Activated CD4-positive, alpha-beta memory T cell treated with anti-CD3 and anti-CD28 coated beads for 36 hours (primary cell): ENCODE measurements at regions of chr1 and their contacts with region 1.

Region 1: DNA sequence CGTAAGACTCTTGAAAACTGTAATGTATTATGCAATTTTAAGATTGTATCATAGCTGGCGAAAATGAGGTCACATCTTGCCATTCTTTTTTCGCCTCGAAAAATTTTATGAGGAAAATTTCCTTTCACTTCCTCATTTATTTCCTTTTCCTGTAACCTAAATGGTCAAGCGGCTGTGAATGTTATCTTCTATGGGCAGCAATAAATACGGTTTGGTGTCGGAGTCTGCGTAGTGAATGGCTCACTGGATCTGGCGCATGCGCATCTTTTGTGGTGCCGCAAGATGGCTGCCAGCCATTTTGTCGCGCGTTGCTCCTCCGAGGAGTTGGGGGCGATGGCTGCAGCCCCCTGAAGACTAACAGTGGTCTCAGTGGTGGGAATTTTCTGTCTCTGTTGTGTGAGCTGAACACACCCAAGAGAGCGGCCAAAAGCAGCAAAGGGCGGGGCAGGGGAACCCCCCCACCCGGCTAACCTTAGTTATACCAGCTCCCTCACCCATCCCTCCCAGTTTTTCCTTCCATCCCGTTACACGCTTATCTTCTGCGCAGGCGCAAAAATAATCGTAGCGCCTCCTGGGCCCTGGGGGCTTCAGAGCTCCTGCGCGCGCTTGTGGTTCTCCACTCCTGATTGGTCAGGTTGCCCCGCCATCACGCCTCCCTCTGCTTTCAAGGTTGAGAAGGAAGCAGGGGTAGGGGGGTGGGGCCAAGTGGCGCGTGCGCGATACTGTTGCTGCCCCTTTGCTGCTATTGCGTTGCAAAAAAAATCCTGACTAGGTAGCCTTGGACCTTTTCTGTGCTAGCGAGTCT is at the start of gene RPRD2:
- DNase-seq: peak; percentile 100
- H3K4me3 Mint-ChIP-seq: peak within 1 kb of the TSS; percentile 99
- H3K27ac Mint-ChIP-seq: peak within 1 kb of the TSS; percentile 100
- H3K4me1 Mint-ChIP-seq: peaks cover 19% of the 10 kb centered on the region
- H3K27me3 Mint-ChIP-seq: peaks cover 1% of the 10 kb centered on the region
- total RNA-seq, gene RPRD2: 22.2 to 22.6 TPM

Region 2: DNA sequence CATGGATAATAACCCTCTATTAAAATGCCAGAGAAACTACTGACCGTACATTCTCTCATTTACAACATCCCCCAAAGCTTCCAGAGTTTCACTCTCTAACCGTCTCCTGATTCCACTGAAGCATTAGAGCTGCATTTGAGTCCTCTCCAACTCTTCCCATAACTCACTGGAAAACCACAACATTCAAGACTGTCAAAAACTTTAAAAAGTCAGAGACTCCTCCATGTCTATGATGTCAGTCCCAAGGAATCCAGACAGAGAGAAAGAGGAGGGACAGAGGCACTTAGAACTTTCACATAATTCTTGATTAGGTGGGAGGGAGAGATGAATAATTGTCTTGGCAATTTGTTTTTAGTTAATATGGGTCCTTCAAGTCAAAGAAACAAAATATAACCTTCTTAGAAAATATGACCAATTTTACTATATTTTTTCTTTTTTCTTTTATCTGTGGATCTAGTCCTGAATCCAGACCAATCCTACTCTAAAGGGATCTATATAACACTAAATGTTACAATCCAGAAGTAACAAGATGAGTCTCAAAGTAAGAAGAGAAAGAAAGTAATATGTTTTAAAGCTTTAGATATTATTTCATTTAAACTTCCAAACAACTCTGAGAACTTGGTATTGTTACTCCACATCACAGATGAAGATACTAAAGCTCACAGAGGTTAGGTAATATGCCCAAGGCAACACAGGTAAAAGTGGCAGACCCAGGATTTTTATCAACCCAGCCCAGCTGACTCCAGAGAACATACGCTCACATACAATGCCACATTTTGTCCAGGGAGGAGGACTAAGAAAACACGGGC is 376.9 kb before region 1 on chr1:
- CTCF ChIA-PET with region 1: no interaction called
- POLR2A ChIA-PET with region 1: no interaction called
- intact Hi-C with region 1: no loop called
- DNase-seq: no peak
- H3K4me3 Mint-ChIP-seq: no peak overlapping the region
- H3K27ac Mint-ChIP-seq: no peak overlapping the region
- H3K4me1 Mint-ChIP-seq: peaks cover 4% of the 10 kb centered on the region
- H3K27me3 Mint-ChIP-seq: no peaks in the 10 kb centered on the region

Region 3: DNA sequence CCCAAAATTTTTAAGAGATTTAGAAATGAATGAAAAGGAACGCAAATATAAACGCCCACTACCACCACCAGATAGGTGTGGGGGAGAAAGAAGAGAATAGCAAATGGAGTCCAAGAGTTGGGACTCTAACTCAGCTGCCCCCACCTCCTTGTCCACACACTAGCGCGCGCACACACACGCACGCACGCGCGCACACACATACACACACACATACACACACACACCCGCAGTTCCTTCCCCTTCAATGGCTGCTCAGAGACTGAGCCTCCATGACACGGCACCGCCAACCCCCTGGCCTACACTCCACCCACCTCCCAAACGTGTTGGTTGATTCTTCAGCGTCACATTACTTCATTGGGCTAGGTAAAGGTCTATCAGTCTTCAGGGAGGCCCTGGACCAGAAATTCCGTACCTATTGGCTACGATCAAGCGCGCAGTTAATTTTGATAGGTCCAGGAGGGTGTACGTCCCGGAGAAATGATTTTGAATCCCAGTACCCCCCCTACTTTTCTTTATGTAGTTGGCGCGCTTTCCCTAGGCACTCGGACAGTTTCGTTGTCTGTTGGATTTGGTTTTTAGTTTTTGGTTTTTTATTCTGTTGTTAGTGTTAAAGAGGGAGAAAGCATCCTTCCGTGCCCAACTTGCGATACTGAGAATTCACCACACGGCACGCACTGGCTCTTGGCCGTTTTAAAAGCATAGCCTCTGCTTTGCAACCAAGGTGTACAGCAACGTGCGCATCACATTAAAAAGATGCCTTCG is 127.6 kb before region 1 on chr1 and contains the start of gene ANP32E:
- CTCF ChIA-PET with region 1: no interaction called
- POLR2A ChIA-PET with region 1: interaction called, 9 read pairs
- intact Hi-C with region 1: loop called (anchors 1 kb)
- DNase-seq: peak; percentile 97
- H3K4me3 Mint-ChIP-seq: no peak within 1 kb of the TSS
- H3K27ac Mint-ChIP-seq: no peak within 1 kb of the TSS
- H3K4me1 Mint-ChIP-seq: peaks cover 17% of the 10 kb centered on the region
- H3K27me3 Mint-ChIP-seq: no peaks in the 10 kb centered on the region
- total RNA-seq, gene ANP32E: 224 to 228 TPM

Region 4: GRCh38 chr1:150293433-150294168 is 70.0 kb before region 1 on chr1 and contains the start of gene MRPS21:
- CTCF ChIA-PET with region 1: no interaction called
- POLR2A ChIA-PET with region 1: no interaction called
- intact Hi-C with region 1: loop called (anchors 5 kb)
- DNase-seq: peak; percentile 94
- H3K4me3 Mint-ChIP-seq: peak within 1 kb of the TSS; percentile 96
- H3K27ac Mint-ChIP-seq: peak within 1 kb of the TSS; percentile 94
- H3K4me1 Mint-ChIP-seq: peaks cover 39% of the 10 kb centered on the region
- H3K27me3 Mint-ChIP-seq: no peaks in the 10 kb centered on the region
- total RNA-seq, gene MRPS21: 78.6 to 82.9 TPM

Region 5: DNA sequence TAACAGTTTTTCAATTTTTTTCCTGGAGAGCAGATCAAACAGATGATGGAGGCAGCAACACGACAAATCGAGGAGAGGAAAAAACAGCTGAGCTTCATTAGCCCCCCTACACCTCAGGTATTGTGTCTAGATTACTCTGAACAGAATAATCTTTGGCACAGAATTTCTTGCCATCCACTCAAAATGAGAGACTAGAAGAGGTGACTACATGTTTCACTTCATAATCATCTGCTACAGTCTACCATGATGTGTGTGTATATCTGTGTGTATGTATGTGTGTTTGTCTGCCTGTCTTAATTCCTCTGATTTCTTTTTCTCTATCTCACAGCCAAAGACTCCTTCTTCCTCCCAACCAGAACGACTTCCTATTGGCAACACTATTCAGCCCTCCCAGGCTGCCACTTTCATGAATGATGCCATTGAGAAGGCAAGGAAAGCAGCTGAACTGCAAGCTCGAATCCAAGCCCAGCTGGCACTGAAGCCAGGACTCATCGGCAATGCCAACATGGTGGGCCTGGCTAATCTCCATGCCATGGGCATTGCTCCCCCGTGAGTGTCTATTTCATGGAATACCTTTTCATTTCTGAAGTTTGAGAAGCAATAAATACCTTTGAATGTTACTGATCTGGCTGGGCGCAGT is 30.9 kb before region 1 on chr1:
- CTCF ChIA-PET with region 1: no interaction called
- POLR2A ChIA-PET with region 1: no interaction called
- intact Hi-C with region 1: no loop called
- DNase-seq: no peak
- H3K4me3 Mint-ChIP-seq: no peak overlapping the region
- H3K27ac Mint-ChIP-seq: no peak overlapping the region
- H3K4me1 Mint-ChIP-seq: peaks cover 6% of the 10 kb centered on the region
- H3K27me3 Mint-ChIP-seq: no peaks in the 10 kb centered on the region

Region 6: GRCh38 chr1:150444232-150444631 is 80.6 kb after region 1 on chr1:
- CTCF ChIA-PET with region 1: no interaction called
- POLR2A ChIA-PET with region 1: no interaction called
- intact Hi-C with region 1: loop called (anchors 5 kb)
- DNase-seq: peak; percentile 13
- H3K4me3 Mint-ChIP-seq: no peak overlapping the region
- H3K27ac Mint-ChIP-seq: peak overlapping the region; percentile 87
- H3K4me1 Mint-ChIP-seq: peaks cover 12% of the 10 kb centered on the region
- H3K27me3 Mint-ChIP-seq: no peaks in the 10 kb centered on the region

Region 7: GRCh38 chr1:150456146-150456647 is 92.6 kb after region 1 on chr1:
- CTCF ChIA-PET with region 1: no interaction called
- POLR2A ChIA-PET with region 1: no interaction called
- intact Hi-C with region 1: no loop called
- DNase-seq: no peak
- H3K4me3 Mint-ChIP-seq: no peak overlapping the region
- H3K27ac Mint-ChIP-seq: no peak overlapping the region
- H3K4me1 Mint-ChIP-seq: peaks cover 6% of the 10 kb centered on the region
- H3K27me3 Mint-ChIP-seq: no peaks in the 10 kb centered on the region

Region 8: DNA sequence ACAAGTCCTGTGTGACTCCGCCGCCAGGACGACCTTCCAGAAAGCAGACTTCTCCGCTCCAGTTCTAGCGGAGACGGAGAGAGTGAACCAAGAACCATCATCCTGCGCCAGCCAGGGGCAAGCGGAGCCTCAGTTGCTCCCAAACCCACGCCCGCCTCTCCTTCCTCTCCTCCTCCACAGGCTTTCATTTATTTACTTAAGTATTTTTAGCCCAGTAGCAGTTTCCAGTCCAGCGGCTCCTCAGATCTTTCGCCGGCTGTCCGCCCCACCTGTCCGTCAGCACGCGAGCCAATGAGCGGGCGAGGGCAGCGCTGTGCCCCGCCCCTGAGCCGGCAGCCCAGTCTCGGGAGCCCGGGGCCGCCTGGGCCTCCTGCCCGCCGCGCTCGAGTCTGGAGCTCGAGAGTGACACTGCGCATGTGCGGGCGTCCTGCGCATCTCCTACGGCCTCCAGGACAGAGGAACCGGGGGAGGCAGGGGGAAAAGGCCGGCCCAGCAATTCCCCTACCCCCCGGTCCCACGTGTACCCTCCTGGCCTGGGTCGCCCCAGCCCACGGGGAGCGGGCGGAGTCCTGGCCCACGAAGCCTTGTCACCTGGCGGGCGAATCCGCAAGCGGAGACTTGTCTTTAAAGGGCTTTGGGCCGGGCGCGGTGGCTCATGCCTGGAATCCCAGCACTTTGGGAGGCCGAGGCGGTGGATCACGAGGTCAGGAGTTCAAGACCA is 151.9 kb after region 1 on chr1 and contains the start of gene FALEC:
- CTCF ChIA-PET with region 1: no interaction called
- POLR2A ChIA-PET with region 1: interaction called, 11 read pairs
- intact Hi-C with region 1: no loop called
- DNase-seq: peak; percentile 94
- H3K4me3 Mint-ChIP-seq: peak within 1 kb of the TSS; percentile 83
- H3K27ac Mint-ChIP-seq: peak within 1 kb of the TSS; percentile 33
- H3K4me1 Mint-ChIP-seq: peaks cover 11% of the 10 kb centered on the region
- H3K27me3 Mint-ChIP-seq: no peaks in the 10 kb centered on the region
- total RNA-seq, gene FALEC: not detected

Region 9: DNA sequence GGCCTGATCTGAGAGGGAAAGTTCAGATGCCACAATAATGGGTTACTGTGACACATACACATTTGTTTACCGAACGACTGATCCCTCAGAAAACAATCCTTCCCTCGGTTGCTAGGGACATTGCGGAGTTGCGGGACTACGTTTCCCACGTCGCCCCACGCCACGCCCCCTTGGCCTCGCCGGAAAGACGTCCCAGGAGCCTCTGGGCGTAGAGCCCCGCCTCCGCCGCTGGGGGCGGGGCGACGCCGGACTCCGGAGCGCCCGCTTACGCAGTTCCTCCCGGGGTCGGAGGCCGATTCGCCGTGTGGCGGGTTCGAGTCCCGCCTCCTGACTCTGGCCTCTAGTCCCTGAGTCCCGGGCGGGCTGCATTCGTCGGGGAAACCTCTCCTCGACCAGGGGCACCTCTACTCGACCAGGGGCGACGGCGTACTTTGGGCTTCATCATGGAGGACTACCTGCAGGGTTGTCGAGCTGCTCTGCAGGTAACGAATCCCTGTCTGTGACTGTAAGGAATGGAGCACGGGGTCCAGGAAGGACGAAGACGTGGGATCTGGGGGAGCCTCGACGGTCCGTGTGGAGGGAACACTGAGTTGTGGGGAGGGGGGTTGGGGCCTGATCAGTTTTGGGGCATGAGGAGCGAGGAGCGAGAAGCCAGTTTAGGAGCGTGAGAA is 644.7 kb after region 1 on chr1 and contains the start of gene PRUNE1:
- CTCF ChIA-PET with region 1: no interaction called
- POLR2A ChIA-PET with region 1: interaction called, 3 read pairs
- intact Hi-C with region 1: loop called (anchors 5 kb)
- DNase-seq: peak; percentile 97
- H3K4me3 Mint-ChIP-seq: peak within 1 kb of the TSS; percentile 99
- H3K27ac Mint-ChIP-seq: peak within 1 kb of the TSS; percentile 97
- H3K4me1 Mint-ChIP-seq: peaks cover 64% of the 10 kb centered on the region
- H3K27me3 Mint-ChIP-seq: no peaks in the 10 kb centered on the region
- total RNA-seq, gene PRUNE1: 12.5 to 17.5 TPM